Endothelial cell of umbilical vein (primary cell): ENCODE measurements at regions of chr12 and their contacts with region 1.

Region 1: GRCh38 chr12:110304061-110304551 is 23.1 kb downstream of the ATP2A2 start:
- DNase-seq: peak; percentile 79
- H3K4me3 ChIP-seq: peak overlapping the region in 1 of 3 experiments; percentile 9
- H3K27ac ChIP-seq: peak overlapping the region; percentile 77
- H3K4me1 ChIP-seq: peaks cover 41% of the 10 kb centered on the region
- H3K27me3 ChIP-seq: no peaks in the 10 kb centered on the region
- CTCF ChIP-seq: no peak
- POLR2A ChIP-seq: no peak

Region 2: DNA sequence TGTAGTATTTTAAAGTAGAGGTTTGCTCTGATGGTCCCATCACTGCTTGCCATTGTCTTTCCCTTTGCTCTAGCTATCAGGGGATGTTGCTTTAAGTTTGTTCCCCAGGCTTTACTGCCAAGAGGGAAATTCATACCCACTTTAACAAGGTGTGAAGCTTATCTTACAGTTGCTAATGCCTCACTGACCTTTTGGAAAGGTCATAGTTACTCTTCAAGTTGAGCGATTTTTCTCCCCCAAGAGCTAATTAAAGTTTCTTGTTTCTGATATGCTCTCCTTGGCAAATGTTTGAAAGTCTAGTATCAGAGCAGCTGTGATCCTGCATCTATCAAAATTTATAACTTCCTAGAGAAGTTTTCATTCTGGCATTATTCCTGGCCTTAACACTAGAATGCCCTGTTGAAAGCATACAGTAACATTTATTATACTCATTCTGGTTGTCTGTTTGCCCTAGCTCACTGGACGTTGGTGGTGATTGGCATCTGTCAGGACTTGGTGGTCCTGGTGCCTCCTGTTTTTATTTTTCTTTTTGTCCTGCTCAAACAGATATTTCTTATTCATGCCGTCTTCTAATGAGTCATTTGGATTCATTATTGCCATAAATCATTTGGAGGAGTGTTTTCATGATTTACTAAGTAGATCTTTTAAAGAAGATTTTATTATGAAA is 14.9 kb before region 1 on chr12:
- CTCF ChIA-PET with region 1: interaction called, 17 read pairs
- POLR2A ChIA-PET with region 1: no interaction called
- dilution Hi-C with region 1: no loop called
- intact Hi-C with region 1: no loop called
- DNase-seq: no peak
- H3K4me3 ChIP-seq: no peak overlapping the region
- H3K27ac ChIP-seq: peak overlapping the region; percentile 23
- H3K4me1 ChIP-seq: peaks cover 28% of the 10 kb centered on the region
- H3K27me3 ChIP-seq: no peaks in the 10 kb centered on the region
- CTCF ChIP-seq: no peak
- POLR2A ChIP-seq: no peak

Region 3: DNA sequence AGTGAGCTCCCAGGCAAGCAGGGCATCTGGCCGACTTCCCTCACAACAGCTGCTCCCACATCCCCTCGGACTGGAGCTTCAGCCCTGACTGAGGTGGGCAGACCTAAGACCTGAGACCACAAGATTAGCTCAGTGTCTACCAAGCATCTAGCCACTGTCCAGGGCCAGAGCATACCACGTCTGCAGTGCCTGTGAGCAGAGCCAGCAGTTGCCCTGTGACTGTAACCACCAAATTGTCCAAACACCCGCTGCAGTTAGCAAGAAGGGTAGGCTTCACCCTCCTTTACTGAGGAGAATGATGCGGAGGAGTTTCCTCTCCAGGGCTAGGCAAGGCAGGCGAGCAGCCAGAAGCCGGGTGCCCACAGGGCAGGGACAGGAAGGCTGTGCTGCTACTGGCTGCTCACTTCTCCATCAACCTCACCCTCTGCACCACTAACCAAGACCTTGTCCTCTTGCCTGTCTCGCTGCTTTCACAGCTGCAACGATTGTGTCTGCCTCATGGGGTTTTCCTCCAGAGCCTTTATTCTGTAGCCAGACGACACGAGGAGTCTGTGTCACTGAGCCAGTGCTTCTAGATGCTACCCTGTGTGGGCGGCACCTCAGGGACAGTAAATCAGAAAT is 45.5 kb after region 1 on chr12:
- CTCF ChIA-PET with region 1: no interaction called
- POLR2A ChIA-PET with region 1: no interaction called
- dilution Hi-C with region 1: no loop called
- intact Hi-C with region 1: loop called (anchors 5 kb)
- DNase-seq: no peak
- H3K4me3 ChIP-seq: no peak overlapping the region
- H3K27ac ChIP-seq: no peak overlapping the region
- H3K4me1 ChIP-seq: peaks cover 16% of the 10 kb centered on the region
- H3K27me3 ChIP-seq: no peaks in the 10 kb centered on the region
- CTCF ChIP-seq: no peak
- POLR2A ChIP-seq: no peak

Region 4: DNA sequence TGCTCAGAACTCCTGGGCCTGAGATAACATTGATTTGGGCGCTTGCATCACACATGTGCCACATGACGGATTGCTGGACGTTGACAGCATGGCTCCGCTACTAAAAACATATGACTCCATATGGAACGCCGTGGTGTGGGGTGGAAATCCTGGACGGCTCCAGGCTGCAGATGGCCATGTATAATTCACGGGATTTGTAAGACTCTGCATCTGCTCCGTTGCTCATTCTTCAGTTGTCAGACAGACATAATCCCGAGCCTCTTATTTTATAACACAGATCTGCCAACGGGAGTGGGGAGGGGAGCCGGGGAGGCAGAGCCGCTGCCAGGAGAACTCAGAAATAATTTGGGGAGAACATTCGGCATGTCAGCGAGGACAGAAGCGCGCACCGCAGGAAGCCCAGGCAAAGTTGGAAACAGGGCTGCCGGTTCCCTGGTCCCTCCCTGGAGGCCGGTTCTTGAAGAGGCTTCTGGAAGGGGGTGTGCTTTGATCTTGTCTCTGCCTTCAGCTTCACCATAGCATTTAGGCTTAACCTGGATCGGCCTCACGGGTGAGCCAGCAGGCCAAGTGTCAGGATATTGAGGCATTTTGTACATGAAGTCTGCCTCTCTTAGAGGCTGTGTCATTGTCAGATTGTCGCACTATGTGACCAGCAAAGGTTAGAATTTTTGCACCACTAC is 662.1 kb after region 1 on chr12:
- CTCF ChIA-PET with region 1: no interaction called
- POLR2A ChIA-PET with region 1: no interaction called
- dilution Hi-C with region 1: no loop called
- intact Hi-C with region 1: no loop called
- DNase-seq: no peak
- H3K4me3 ChIP-seq: no peak overlapping the region
- H3K27ac ChIP-seq: no peak overlapping the region
- H3K4me1 ChIP-seq: no peaks in the 10 kb centered on the region
- H3K27me3 ChIP-seq: peaks cover 0 to 2% of the 10 kb centered on the region in 2 experiments
- CTCF ChIP-seq: no peak
- POLR2A ChIP-seq: no peak

Region 5: GRCh38 chr12:111201036-111201435 is 896.9 kb after region 1 on chr12:
- CTCF ChIA-PET with region 1: no interaction called
- POLR2A ChIA-PET with region 1: no interaction called
- dilution Hi-C with region 1: no loop called
- intact Hi-C with region 1: no loop called
- DNase-seq: no peak
- H3K4me3 ChIP-seq: no peak overlapping the region
- H3K27ac ChIP-seq: no peak overlapping the region
- H3K4me1 ChIP-seq: no peaks in the 10 kb centered on the region
- H3K27me3 ChIP-seq: no peaks in the 10 kb centered on the region
- CTCF ChIP-seq: no peak
- POLR2A ChIP-seq: no peak